ENCODE measurements at regions of chr17 and their contacts with region 1.

Region 1: GRCh38 chr17:49556223-49556971 is 19.3 kb upstream of the NXPH3 start:
- DNase-seq: peak; percentile 90
- ATAC-seq: peak; percentile 98
- H3K4me3 Mint-ChIP-seq: no peak overlapping the region
- H3K27ac Mint-ChIP-seq: peak overlapping the region; percentile 20
- H3K4me1 Mint-ChIP-seq: peaks cover 2% of the 10 kb centered on the region
- H3K27me3 Mint-ChIP-seq: peaks cover 2% of the 10 kb centered on the region
- CTCF ChIP-seq: peak; percentile 98

Region 2: DNA sequence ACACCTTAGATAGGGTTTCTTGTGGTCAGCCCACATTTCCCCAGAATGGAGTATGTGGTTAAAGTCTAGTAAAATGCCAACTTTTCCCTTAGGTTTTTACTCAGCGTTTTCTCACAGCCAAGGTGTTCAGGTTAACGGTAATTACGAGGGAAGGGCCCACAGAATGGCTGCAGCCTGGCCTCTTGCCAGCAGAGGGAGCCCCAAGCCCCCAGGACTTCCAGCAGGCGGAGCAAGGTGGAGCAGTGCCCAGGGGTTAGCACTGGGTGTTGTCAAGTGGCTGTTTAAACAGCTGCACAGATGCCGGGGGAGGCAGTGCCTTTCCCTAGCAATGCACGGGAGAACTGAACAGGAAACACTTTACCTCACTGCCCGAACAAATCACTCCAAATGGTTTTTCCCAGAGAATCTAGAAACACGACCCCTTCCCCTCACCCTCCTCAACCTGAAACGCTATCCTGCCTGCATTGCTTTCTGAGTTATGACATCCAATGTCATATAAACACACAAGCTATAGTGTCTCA is 148.4 kb before region 1 on chr17:
- CTCF ChIA-PET with region 1: interaction called, 160 read pairs
- POLR2A ChIA-PET with region 1: no interaction called
- intact Hi-C with region 1: loop called (anchors 2 kb)
- DNase-seq: peak; percentile 92
- ATAC-seq: peak; percentile 98
- H3K4me3 Mint-ChIP-seq: no peak overlapping the region
- H3K27ac Mint-ChIP-seq: peak overlapping the region; percentile 65
- H3K4me1 Mint-ChIP-seq: peaks cover 49% of the 10 kb centered on the region
- H3K27me3 Mint-ChIP-seq: no peaks in the 10 kb centered on the region
- CTCF ChIP-seq: peak; percentile 98

Region 3: GRCh38 chr17:49443862-49444261 is 112.5 kb before region 1 on chr17:
- CTCF ChIA-PET with region 1: interaction called, 13 read pairs
- POLR2A ChIA-PET with region 1: no interaction called
- intact Hi-C with region 1: loop called (anchors 5 kb)
- DNase-seq: no peak
- ATAC-seq: no peak
- H3K4me3 Mint-ChIP-seq: no peak overlapping the region
- H3K27ac Mint-ChIP-seq: no peak overlapping the region
- H3K4me1 Mint-ChIP-seq: no peaks in the 10 kb centered on the region
- H3K27me3 Mint-ChIP-seq: peaks cover 16% of the 10 kb centered on the region
- CTCF ChIP-seq: no peak

Region 4: GRCh38 chr17:49501504-49501903 is 54.9 kb before region 1 on chr17:
- CTCF ChIA-PET with region 1: interaction called, 81 read pairs
- POLR2A ChIA-PET with region 1: no interaction called
- intact Hi-C with region 1: loop called (anchors 10 kb)
- DNase-seq: no peak
- ATAC-seq: no peak
- H3K4me3 Mint-ChIP-seq: no peak overlapping the region
- H3K27ac Mint-ChIP-seq: no peak overlapping the region
- H3K4me1 Mint-ChIP-seq: peaks cover 13% of the 10 kb centered on the region
- H3K27me3 Mint-ChIP-seq: peaks cover 65% of the 10 kb centered on the region
- CTCF ChIP-seq: no peak

Region 5: DNA sequence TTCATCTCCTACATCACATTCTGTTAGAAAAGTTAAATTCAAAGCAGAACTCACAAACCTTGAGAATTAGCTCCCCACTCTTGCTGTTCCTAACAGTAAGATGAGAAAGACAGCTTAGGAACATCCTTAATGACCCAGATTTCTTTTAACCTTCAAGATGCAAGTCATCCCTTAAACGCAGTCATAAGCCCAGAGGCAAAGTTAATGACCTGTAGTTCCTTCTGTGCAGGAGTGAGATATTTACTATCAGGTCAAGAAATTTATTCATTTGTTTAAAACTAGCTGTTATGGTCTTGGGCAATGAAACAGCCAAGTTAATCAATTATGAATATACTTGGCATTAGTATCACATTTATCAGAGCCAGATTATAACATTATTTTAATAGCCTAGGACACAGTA is 56.3 kb after region 1 on chr17:
- CTCF ChIA-PET with region 1: interaction called, 10 read pairs
- POLR2A ChIA-PET with region 1: no interaction called
- intact Hi-C with region 1: no loop called
- DNase-seq: no peak
- ATAC-seq: no peak
- H3K4me3 Mint-ChIP-seq: no peak overlapping the region
- H3K27ac Mint-ChIP-seq: no peak overlapping the region
- H3K4me1 Mint-ChIP-seq: peaks cover 10% of the 10 kb centered on the region
- H3K27me3 Mint-ChIP-seq: no peaks in the 10 kb centered on the region
- CTCF ChIP-seq: no peak

Measured in activated CD8-positive, alpha-beta T cell treated with anti-CD3 and anti-CD28 coated beads for 36 hours (primary cell).